HEK293 (cell line): ENCODE measurements at regions of chr11 and their contacts with region 1.

Region 1: DNA sequence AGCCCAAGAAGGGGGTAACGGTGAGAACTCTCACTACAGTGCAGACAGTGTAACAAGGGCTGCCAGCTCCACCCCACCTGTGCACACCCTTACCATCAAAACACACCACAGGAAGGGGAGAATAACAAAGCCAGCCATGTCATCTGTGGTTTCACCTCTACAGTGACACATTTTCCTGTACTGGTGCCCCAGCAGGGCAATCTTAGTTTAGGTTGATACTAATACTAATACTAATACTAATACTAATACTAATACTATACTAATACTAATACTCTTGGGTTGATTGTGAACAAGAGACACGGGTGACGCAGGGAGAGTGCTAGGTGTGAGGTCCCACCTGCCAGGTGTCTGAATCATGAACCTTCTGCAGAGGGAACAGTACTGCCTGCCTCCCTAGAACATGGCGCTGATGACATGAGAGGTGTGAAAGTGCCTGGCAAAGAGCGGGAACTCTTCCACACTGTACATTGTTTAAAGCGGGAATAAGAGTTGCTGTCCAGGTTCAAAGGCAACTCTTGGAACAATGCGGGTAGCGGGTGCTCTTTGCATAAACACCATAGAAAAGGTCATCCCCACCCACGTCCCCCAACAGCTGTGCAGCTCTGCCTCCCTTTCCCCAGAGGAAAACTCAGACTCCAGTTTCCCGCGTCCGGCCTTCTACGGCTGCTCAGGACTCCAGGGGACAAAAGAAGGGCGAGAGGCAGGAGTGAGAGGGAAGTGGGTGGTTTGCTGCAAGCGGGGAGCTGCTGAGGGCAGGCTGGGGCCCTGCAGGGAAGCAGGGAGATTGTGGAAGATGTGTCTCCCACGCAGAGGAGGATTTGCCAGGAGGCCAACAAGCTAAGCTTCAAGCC is 25.0 kb upstream of the TMPRSS4 start:
- H3K4me3 ChIP-seq: no peak overlapping the region
- H3K27ac ChIP-seq: no peak overlapping the region
- H3K4me1 ChIP-seq: no peaks in the 10 kb centered on the region
- CTCF ChIP-seq: no peak

Region 2: DNA sequence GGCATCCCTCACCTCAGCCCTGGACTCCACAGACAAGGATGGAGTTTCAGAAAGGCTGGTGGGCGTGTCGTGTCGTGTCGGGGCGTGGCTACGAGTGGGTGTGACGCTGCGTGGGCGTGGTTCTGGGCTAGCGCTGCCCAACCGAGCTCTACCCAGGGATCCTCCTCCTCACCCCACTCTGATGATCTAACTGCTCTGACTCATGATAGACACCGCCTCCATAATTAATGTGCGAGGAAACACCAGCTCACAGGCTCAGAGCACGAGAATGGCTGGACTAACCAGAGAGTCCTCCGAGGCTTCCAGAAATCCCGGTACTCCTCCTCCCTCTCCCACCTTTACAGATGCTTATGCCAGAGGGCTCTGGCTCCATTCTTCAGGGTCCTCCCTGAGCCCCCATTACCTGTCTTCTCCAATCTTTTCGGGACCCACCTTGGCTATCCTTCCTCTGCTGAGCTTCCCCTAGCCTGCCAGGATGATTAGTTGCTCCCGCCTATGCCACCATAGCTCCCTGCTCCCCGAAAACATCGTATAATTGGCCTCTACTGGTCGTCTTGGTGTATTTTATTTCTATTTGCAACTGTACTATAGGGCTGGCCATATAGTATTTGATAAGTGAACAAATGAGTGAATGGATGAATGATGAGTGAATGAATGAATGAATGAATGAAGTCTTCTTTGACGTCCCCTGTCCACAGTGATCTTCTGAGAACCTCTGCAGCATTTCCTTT is 144.4 kb before region 1 on chr11:
- CTCF ChIA-PET with region 1: interaction called, 13 read pairs
- POLR2A ChIA-PET with region 1: no interaction called
- H3K4me3 ChIP-seq: no peak overlapping the region
- H3K27ac ChIP-seq: no peak overlapping the region
- H3K4me1 ChIP-seq: no peaks in the 10 kb centered on the region
- CTCF ChIP-seq: no peak

Region 3: DNA sequence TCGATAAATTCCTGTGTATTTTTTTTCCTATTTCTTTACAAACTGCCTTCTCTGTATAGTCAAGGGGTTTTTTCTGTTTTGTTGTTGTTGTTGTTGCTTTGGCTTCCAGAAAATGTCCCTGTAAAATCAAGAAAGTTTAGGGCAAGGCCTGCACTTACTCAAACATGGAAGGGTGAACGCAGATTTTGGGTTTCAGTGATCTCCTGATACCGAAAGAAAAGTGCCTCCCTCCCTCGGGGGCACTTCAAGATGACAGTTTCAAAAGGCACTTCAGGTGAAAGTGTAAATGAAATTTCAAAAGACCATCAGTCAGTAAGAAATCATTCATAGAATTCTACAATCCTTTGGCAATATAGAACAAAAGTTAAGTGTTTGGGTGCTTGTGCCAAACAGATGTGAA is 18.4 kb before region 1 on chr11:
- CTCF ChIA-PET with region 1: interaction called, 10 read pairs
- POLR2A ChIA-PET with region 1: no interaction called
- H3K4me3 ChIP-seq: no peak overlapping the region
- H3K27ac ChIP-seq: no peak overlapping the region
- H3K4me1 ChIP-seq: no peaks in the 10 kb centered on the region
- CTCF ChIP-seq: no peak